Esophagus muscularis mucosa (tissue), 4 donors: ENCODE measurements at regions of chr9 and their contacts with region 1.

Region 1: DNA sequence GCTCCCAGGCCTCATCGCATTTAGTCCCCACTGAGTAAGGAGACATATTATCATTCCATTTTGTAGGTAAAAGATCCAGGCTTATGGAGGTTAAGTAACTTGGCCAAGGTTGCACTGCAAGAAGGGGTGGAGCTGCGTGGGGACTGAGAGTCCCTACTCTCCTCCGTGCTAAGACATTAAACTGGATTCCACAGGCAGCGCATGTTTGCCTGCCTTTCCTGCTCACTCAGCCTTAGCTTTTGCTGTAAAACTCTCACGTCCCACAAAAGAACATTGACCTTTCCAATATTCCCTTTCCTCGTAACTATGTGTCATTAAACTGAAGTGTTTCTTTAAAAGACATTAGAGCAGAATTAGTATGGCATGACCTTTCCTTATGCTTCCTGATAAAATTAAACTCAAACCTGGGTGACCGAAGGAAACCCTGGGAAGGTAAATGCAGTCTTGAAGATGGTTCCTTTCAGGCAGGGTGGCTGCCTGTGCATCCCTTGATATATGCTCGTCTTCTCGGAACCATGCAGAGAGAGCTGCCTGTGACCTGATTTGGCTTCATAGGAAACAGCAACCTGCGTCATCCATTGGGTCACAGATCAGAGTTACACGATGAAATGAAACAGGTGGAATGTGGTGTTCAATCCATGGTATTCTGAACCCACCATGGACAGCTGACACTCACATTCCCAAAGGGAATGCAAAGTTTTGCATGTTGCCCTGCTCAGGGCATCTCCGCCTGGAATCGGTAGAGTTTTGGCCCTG is 85.9 kb downstream of the TMEM252 start:
- DNase-seq: no peak
- H3K4me3 ChIP-seq: no peak overlapping the region
- H3K27ac ChIP-seq: peak overlapping the region; percentile 81 to 91 (median 86)
- H3K4me1 ChIP-seq: peaks cover 37 to 94% (median 93%) of the 10 kb centered on the region in 4 donors
- H3K27me3 ChIP-seq: no peaks in the 10 kb centered on the region
- CTCF ChIP-seq: no peak
- EP300 ChIP-seq: peak; percentile 52
- POLR2A ChIP-seq: no peak

Region 2: DNA sequence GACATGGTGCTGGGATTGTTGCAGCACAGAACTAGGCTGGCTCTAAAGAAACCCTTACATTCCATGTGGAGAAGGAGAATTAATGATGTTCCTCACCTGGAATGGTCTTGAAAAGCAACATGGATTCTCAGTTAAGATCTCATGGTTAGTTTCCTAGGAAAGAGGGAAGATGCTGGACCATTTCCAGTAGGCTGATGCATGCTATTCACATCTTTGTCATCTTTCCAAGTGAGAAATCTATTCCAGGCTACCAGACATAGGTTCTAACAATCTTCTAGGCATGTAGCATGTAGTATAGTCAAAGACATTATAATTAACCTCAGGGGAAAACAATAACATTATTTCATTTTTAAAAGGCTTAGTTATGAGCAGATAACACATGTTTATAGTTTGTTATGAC is 41.6 kb after region 1 on chr9:
- intact Hi-C with region 1: loop called (anchors 5 kb)
- DNase-seq: no peak
- H3K4me3 ChIP-seq: no peak overlapping the region
- H3K27ac ChIP-seq: peak overlapping the region; percentile 85 to 89 (median 88)
- H3K4me1 ChIP-seq: peaks cover 59 to 88% (median 77%) of the 10 kb centered on the region in 4 donors
- H3K27me3 ChIP-seq: no peaks in the 10 kb centered on the region
- CTCF ChIP-seq: no peak
- EP300 ChIP-seq: no peak
- POLR2A ChIP-seq: no peak

Region 3: GRCh38 chr9:68507130-68507805 is 52.5 kb after region 1 on chr9:
- intact Hi-C with region 1: no loop called
- DNase-seq: no peak
- H3K4me3 ChIP-seq: no peak overlapping the region
- H3K27ac ChIP-seq: peak overlapping the region; percentile 85 to 89 (median 88)
- H3K4me1 ChIP-seq: peaks cover 27 to 68% (median 60%) of the 10 kb centered on the region in 4 donors
- H3K27me3 ChIP-seq: no peaks in the 10 kb centered on the region
- CTCF ChIP-seq: peak; percentile 79 to 84 (median 79)
- EP300 ChIP-seq: no peak
- POLR2A ChIP-seq: no peak